Prostate gland (tissue), 2 donors: ENCODE measurements at regions of chr1 and their contacts with region 1.

Region 1: GRCh38 chr1:36385410-36386257 is at the start of gene STK40:
- DNase-seq: peak; percentile 99
- H3K4me3 ChIP-seq: peak within 1 kb of the TSS; percentile 81 to 96
- H3K27ac ChIP-seq: peak within 1 kb of the TSS; percentile 98 to 99
- H3K4me1 ChIP-seq: peaks cover 19% of the 10 kb centered on the region
- H3K27me3 ChIP-seq: no peaks in the 10 kb centered on the region
- CTCF ChIP-seq: no peak
- POLR2A ChIP-seq: peak; percentile 97
- total RNA-seq, gene STK40: 30.8 to 111 TPM

Region 2: GRCh38 chr1:36155408-36156328 is 230.0 kb before region 1 on chr1 and contains the start of gene MAP7D1:
- intact Hi-C with region 1: loop called (anchors 5 kb)
- DNase-seq: peak; percentile 81
- H3K4me3 ChIP-seq: peak within 1 kb of the TSS; percentile 100
- H3K27ac ChIP-seq: peak within 1 kb of the TSS; percentile 99 to 100
- H3K4me1 ChIP-seq: peaks cover 40% of the 10 kb centered on the region
- H3K27me3 ChIP-seq: no peaks in the 10 kb centered on the region
- CTCF ChIP-seq: peak in 1 of 4 experiments; percentile 24
- POLR2A ChIP-seq: peak; percentile 87
- total RNA-seq, gene MAP7D1: 97.3 to 132 TPM

Region 3: GRCh38 chr1:36397378-36398230 is 12.0 kb after region 1 on chr1 and contains the start of gene LSM10:
- intact Hi-C with region 1: loop called (anchors 1 kb)
- DNase-seq: peak; percentile 92
- H3K4me3 ChIP-seq: peak within 1 kb of the TSS; percentile 58 to 67
- H3K27ac ChIP-seq: peak within 1 kb of the TSS; percentile 84 to 90
- H3K4me1 ChIP-seq: no peaks in the 10 kb centered on the region
- H3K27me3 ChIP-seq: no peaks in the 10 kb centered on the region
- CTCF ChIP-seq: no peak
- POLR2A ChIP-seq: peak; percentile 90
- total RNA-seq, gene LSM10: 36.8 to 72.7 TPM